ENCODE measurements at regions of chr20 and their contacts with region 1.

Region 1: GRCh38 chr20:37154684-37155298 is 24.3 kb upstream of the RPN2 start:
- DNase-seq: peak; percentile 52 to 81 (median 70)
- ATAC-seq: peak; percentile 89
- H3K4me3 ChIP-seq: no peak overlapping the region
- H3K27ac ChIP-seq: peak overlapping the region; percentile 56; the same call in 2 of the 3 replicates
- H3K4me1 ChIP-seq: peaks cover 19 to 20% of the 10 kb centered on the region in 2 experiments; a peak in 4 of 5 replicates
- H3K27me3 ChIP-seq: no peaks in the 10 kb centered on the region
- CTCF ChIP-seq: no peak
- EP300 ChIP-seq: peak; percentile 96
- POLR2A ChIP-seq: no peak
- RAD21 ChIP-seq: peak in 1 of 2 experiments; percentile 17; a peak in 1 of 4 replicates

Region 2: DNA sequence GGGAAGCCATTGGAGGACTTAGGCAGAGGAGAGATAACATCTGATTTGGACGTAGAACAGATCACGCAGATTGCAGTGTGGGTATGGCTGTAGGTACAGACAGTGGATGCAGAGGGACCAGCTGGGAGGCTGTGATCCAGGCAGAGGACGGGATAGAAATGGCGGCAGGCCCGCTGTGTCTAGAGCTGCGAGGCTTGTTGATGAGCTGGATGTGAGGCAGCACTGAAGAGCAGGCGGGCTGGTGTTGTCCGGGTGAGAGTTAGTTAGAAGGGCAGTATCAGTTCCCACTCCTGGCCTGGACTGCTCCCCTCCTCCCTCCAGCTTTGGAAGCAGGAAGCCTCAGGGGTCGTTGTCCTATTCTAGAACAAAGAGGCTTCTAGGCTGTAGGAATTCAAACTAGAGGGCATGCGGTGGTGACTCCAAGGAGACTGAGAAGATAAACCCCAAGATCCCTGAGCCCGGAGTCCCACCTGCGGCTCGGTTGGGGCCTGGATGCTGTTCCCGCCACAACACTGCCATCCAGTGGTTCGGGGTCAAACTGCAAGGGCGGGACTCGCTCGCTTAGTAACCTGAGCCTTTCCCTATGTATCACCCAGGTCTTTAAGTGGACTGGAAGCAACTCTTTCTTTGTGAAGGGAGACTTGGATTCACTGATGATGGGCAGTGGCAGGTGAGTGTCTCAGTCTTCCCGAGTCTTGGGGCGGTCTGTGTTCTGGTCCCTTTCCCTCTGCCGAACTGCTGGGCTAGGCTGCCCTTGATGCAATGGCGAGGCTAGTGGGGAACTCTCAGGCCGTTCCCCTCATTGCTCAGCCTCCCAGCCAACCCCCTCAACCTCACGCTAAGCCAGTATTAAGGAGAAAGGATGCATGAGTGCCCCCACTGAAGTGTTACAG is 267.7 kb before region 1 on chr20:
- CTCF ChIA-PET with region 1: no interaction called
- POLR2A ChIA-PET with region 1: no interaction called
- in situ Hi-C with region 1: no loop called
- intact Hi-C with region 1: no loop called
- DNase-seq: peak; percentile 86 to 89 (median 88)
- ATAC-seq: peak; percentile 98
- H3K4me3 ChIP-seq: no peak overlapping the region
- H3K27ac ChIP-seq: no peak overlapping the region
- H3K4me1 ChIP-seq: peaks cover 0 to 13% of the 10 kb centered on the region in 2 experiments; a peak in 3 of 5 replicates
- H3K27me3 ChIP-seq: no peaks in the 10 kb centered on the region
- CTCF ChIP-seq: peak; percentile 92 to 99 (median 97)
- EP300 ChIP-seq: no peak
- POLR2A ChIP-seq: no peak
- RAD21 ChIP-seq: peak; percentile 94 to 96

Region 3: GRCh38 chr20:37053230-37053950 is 101.4 kb before region 1 on chr20:
- CTCF ChIA-PET with region 1: no interaction called
- POLR2A ChIA-PET with region 1: no interaction called
- in situ Hi-C with region 1: no loop called
- intact Hi-C with region 1: no loop called
- DNase-seq: no peak
- ATAC-seq: no peak
- H3K4me3 ChIP-seq: no peak overlapping the region
- H3K27ac ChIP-seq: no peak overlapping the region
- H3K4me1 ChIP-seq: no peaks in the 10 kb centered on the region
- H3K27me3 ChIP-seq: no peaks in the 10 kb centered on the region
- CTCF ChIP-seq: no peak
- EP300 ChIP-seq: no peak
- POLR2A ChIP-seq: no peak
- RAD21 ChIP-seq: no peak

Region 4: DNA sequence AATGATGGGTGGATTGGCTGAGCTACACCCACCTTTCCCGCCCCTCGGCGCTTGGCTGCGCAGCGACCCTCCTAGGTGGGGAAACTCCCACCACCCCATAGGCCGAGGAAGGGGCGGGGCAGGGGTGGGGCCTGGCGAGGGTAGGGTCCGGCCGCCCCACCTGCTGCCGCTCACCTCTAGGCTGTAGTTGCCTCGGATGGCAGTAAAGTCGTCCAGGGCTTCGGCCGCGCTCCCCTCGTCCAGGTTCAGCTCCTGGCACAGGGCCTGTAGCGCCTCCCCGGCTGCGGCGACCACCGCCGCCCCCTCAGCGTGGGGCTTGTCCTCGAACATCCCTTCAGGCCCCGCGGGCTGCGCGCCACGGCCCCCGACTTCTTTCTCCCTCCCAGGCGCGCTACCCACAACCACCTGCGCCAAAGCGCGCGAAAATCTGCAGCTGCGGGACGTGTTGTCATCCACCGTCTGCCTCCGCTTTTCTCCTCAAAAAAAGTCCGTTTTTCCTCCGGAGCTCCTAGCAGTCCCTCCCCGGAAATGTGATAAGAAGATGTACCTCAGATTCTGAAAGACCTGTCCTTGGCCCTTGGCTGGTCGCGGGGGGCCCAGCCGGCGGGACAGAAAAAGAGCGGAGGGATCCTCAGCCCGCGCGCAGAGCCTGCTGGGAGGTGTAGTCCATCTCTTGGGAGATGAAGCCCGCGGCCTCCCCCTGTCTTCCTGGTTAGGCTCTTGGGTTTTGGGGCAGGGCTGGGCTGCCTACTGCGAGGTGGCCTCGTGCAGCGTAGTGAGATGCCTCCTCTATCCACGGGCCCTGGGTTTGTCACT is 59.0 kb before region 1 on chr20 and contains the start of gene RBL1:
- CTCF ChIA-PET with region 1: no interaction called
- POLR2A ChIA-PET with region 1: interaction called, 4 read pairs
- in situ Hi-C with region 1: no loop called
- intact Hi-C with region 1: loop called (anchors 1 kb)
- DNase-seq: peak; percentile 85 to 96 (median 89)
- ATAC-seq: peak; percentile 89
- H3K4me3 ChIP-seq: peak within 1 kb of the TSS; percentile 50
- H3K27ac ChIP-seq: peak within 1 kb of the TSS; percentile 99
- H3K4me1 ChIP-seq: peaks cover 24 to 25% of the 10 kb centered on the region in 2 experiments
- H3K27me3 ChIP-seq: no peaks in the 10 kb centered on the region
- CTCF ChIP-seq: peak; percentile 18 to 44 (median 33); a peak in 3 of 6 replicates
- EP300 ChIP-seq: no peak; the same call in 1 of the 2 replicates
- POLR2A ChIP-seq: peak; percentile 91
- RAD21 ChIP-seq: no peak; a peak in 1 of 4 replicates
- polyA plus RNA-seq, gene RBL1: 4.0 to 4.3 TPM

Region 5: GRCh38 chr20:37218441-37218840 is 63.6 kb after region 1 on chr20:
- CTCF ChIA-PET with region 1: no interaction called
- POLR2A ChIA-PET with region 1: no interaction called
- in situ Hi-C with region 1: no loop called
- intact Hi-C with region 1: no loop called
- DNase-seq: no peak
- ATAC-seq: no peak
- H3K4me3 ChIP-seq: no peak overlapping the region
- H3K27ac ChIP-seq: no peak overlapping the region
- H3K4me1 ChIP-seq: no peaks in the 10 kb centered on the region
- H3K27me3 ChIP-seq: no peaks in the 10 kb centered on the region
- CTCF ChIP-seq: no peak
- EP300 ChIP-seq: no peak
- POLR2A ChIP-seq: no peak
- RAD21 ChIP-seq: no peak

Region 6: DNA sequence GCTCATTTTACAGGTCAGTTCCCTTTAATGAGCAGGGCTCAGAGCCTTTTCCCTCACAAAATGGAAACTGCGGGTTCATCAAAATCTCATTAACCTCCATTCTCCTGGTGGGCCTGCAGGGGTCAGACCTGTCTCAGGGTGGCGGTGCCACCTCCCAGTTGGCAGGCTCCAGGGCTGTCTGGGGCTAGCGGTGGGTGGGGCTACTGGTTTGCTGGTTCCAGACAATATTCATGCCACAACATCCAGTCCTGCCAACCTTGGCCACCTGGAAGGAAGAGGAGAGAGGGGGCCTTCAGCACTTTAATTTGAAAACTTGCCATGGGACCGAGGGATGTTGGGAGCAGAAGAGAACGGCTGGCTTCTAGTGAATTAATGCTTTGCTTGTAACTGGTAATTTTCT is 497.1 kb after region 1 on chr20:
- CTCF ChIA-PET with region 1: no interaction called
- POLR2A ChIA-PET with region 1: no interaction called
- in situ Hi-C with region 1: no loop called
- intact Hi-C with region 1: no loop called
- DNase-seq: peak in 3 of 4 experiments; percentile 24 to 30 (median 27)
- ATAC-seq: peak; percentile 74
- H3K4me3 ChIP-seq: no peak overlapping the region
- H3K27ac ChIP-seq: no peak overlapping the region
- H3K4me1 ChIP-seq: no peaks in the 10 kb centered on the region
- H3K27me3 ChIP-seq: peaks cover 6 to 26% of the 10 kb centered on the region in 2 experiments; a peak in 4 of 5 replicates
- CTCF ChIP-seq: peak; percentile 59 to 66 (median 60)
- EP300 ChIP-seq: no peak
- POLR2A ChIP-seq: no peak
- RAD21 ChIP-seq: peak; percentile 44 to 77

Measured in K562 (cell line).